Left ventricle myocardium superior (tissue), 1 donor: ENCODE measurements at regions of chr20 and their contacts with region 1.

Region 1: GRCh38 chr20:31674895-31675827 is 37.4 kb downstream of the COX4I2 start:
- DNase-seq: peak; percentile 65
- ATAC-seq: peak; percentile 48

Region 2: DNA sequence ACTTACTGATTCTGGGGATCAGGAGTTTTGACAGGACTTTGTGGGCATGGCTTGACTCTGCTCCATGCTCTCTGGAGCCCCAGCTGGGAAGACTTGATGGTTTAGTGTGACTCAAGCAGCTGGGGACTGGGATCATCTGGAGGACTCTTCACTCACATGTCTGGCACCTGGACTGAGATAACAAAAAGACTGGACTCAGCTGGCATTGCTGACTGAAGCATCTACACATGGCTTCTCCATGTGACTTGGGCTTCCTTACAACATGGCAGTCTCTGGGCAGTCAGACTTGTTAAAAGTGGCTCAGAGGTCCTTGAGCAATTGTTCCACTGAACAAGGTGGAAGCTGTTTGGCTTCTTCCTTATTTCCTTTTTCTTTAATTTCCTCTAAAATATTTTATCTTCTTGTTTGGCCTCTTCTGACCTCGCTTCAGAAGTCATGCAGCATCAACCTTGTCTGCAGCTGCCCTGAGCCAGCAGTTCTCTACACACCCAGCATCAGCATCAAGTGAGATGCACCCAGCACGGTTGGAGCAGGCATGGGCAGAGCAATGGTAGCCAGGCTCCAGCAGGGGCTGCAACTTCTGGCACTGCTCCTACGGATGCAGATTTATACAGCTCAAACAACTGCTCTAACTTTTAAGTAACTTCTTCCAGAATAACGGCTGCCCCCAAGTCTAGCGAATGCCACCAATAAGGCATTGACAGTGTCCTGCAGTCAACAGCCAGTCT is 166.5 kb before region 1 on chr20:
- intact Hi-C with region 1: no loop called
- DNase-seq: no peak
- ATAC-seq: no peak

Region 3: GRCh38 chr20:31723319-31724078 is 48.3 kb after region 1 on chr20:
- intact Hi-C with region 1: loop called (anchors 5 kb)
- DNase-seq: peak; percentile 99
- ATAC-seq: peak; percentile 95